Head of caudate nucleus (tissue), 42 donors: ENCODE measurements at regions of chr4 and their contacts with region 1.

Region 1: GRCh38 chr4:102344954-102345794 is at the start of gene SLC39A8:
- DNase-seq: peak; percentile 51 to 90 (median 78)

Region 2: DNA sequence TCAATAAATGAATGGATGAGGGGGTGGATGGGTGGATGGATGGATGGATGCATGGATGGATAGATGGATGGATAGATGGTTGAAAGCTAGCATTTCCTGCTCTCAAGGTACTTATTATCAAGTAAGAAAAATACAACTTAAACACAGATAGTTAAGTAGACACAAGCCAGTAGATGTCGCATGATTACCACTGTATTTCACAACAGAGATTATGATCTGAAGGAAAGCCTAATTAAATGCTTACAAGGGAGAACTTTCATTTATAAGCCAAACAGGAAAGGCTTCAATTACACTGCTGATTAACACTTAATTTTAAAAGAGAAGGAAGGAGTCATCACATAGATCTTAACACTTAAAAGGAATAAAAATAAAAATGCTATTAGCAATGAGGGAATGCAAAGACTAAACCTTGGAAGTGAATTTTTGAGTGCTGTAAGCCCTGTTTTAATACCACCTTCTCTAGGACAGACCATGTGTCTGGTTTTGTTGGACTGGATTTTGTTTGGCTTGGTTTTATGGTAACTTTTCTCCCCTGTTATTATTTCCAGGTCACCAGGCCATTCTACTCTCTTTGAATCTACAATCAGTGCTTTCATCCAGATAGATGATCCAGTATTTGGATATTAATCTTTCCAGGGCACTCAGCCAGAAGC is 75.5 kb after region 1 on chr4:
- intact Hi-C with region 1: loop called (anchors 10 kb)
- DNase-seq: no peak